IMR-90 (cell line): ENCODE measurements at regions of chr7 and their contacts with region 1.

Region 1: GRCh38 chr7:78399033-78399769 is 600.6 kb downstream of the PHTF2 start:
- DNase-seq: no peak
- ATAC-seq: no peak
- H3K4me3 ChIP-seq: no peak overlapping the region
- H3K27ac ChIP-seq: no peak overlapping the region
- H3K4me1 ChIP-seq: peaks cover 1% of the 10 kb centered on the region; the same call in 1 of the 2 replicates
- H3K27me3 ChIP-seq: no peaks in the 10 kb centered on the region
- CTCF ChIP-seq: no peak
- POLR2A ChIP-seq: no peak
- RAD21 ChIP-seq: no peak

Region 2: DNA sequence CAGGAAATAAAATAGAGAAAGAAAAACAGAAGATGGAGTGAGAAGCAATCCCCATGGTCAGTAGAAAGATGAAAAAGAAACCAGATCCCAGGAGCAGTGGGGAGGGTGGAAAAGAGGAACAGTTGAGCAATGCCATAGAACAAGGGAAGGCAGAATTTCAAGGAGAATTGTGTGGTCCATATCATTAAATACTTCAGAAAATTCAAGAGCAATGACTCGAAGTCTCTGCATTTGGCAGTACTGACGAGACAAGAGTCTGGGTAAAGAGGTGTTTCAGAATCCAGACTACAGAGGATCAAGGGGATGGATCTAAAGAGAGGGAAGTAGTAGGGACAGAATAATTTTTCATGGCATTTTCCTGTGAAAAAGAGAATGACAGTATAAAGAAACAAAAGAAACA is 88.0 kb before region 1 on chr7:
- CTCF ChIA-PET with region 1: no interaction called
- POLR2A ChIA-PET with region 1: interaction called, 3 read pairs
- dilution Hi-C with region 1: no loop called
- in situ Hi-C with region 1: no loop called
- intact Hi-C with region 1: loop called (anchors 5 kb)
- DNase-seq: no peak
- ATAC-seq: no peak
- H3K4me3 ChIP-seq: no peak overlapping the region
- H3K27ac ChIP-seq: no peak overlapping the region
- H3K4me1 ChIP-seq: no peaks in the 10 kb centered on the region
- H3K27me3 ChIP-seq: no peaks in the 10 kb centered on the region
- CTCF ChIP-seq: no peak
- POLR2A ChIP-seq: no peak
- RAD21 ChIP-seq: no peak

Region 3: GRCh38 chr7:78686189-78686588 is 287.0 kb after region 1 on chr7:
- CTCF ChIA-PET with region 1: no interaction called
- POLR2A ChIA-PET with region 1: no interaction called
- dilution Hi-C with region 1: no loop called
- in situ Hi-C with region 1: no loop called
- intact Hi-C with region 1: no loop called
- DNase-seq: no peak
- ATAC-seq: no peak
- H3K4me3 ChIP-seq: no peak overlapping the region
- H3K27ac ChIP-seq: no peak overlapping the region
- H3K4me1 ChIP-seq: no peaks in the 10 kb centered on the region
- H3K27me3 ChIP-seq: no peaks in the 10 kb centered on the region
- CTCF ChIP-seq: no peak
- POLR2A ChIP-seq: no peak
- RAD21 ChIP-seq: no peak